Activated naive CD4-positive, alpha-beta T cell treated with anti-CD3 and anti-CD28 coated beads for 36 hours (primary cell): ENCODE measurements at regions of chr2 and their contacts with region 1.

Region 1: GRCh38 chr2:198042189-198042588 is 237.8 kb downstream of the PLCL1 start:
- DNase-seq: no peak
- H3K4me3 Mint-ChIP-seq: no peak overlapping the region
- H3K27ac Mint-ChIP-seq: no peak overlapping the region
- H3K4me1 Mint-ChIP-seq: peaks cover 15% of the 10 kb centered on the region
- H3K27me3 Mint-ChIP-seq: no peaks in the 10 kb centered on the region

Region 2: DNA sequence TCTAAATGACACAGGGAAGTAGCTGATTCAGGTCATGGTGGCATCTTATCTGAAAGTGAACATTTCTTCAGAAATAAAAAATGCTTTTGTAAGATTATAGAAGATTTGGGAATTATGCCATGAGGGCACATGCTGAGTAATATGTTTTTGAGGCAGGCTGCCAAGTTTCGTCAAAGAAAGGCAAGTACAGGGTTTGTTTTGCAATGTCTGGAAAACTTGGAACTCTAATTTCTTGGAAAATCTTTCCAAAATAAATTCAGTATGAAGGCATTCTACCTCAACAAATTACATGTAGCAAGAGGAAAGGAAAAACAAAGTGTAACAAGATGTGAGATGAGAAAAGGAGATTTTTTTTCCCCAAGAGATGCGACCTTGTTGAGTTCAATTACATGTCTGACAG is 70.1 kb before region 1 on chr2:
- CTCF ChIA-PET with region 1: no interaction called
- intact Hi-C with region 1: loop called (anchors 2 kb)
- DNase-seq: no peak
- H3K4me3 Mint-ChIP-seq: no peak overlapping the region
- H3K27ac Mint-ChIP-seq: no peak overlapping the region
- H3K4me1 Mint-ChIP-seq: peaks cover 43% of the 10 kb centered on the region
- H3K27me3 Mint-ChIP-seq: no peaks in the 10 kb centered on the region